ENCODE measurements at regions of chr1 and their contacts with region 1.

Region 1: DNA sequence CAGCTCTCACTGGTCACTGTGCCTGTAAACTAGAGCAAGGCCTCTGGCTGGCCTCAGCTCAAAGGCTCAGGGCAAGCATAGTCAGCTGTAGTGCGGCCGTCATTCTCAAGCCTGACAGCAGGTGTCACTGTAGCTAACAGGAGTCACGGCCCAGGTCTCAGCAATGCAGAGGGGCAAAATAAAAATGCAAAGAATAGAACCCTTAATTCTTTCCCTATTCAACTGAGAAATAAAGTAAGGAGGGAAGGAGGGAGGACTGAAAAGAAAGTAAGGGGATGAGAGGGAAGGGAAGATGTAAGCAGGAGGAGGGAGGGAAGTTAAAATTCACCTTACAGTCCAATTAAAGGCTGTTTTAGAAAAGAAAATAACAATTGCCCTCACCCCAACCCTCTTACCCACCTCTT is 106.1 kb downstream of the KIAA0319L start:
- DNase-seq: peak; percentile 51
- H3K4me3 ChIP-seq: no peak overlapping the region
- H3K27ac ChIP-seq: peak overlapping the region; percentile 87
- H3K27me3 ChIP-seq: no peaks in the 10 kb centered on the region
- CTCF ChIP-seq: peak; percentile 89

Region 2: GRCh38 chr1:35466120-35466519 is 15.0 kb after region 1 on chr1:
- CTCF ChIA-PET with region 1: interaction called, 20 read pairs
- POLR2A ChIA-PET with region 1: no interaction called
- DNase-seq: no peak
- H3K4me3 ChIP-seq: no peak overlapping the region
- H3K27ac ChIP-seq: no peak overlapping the region
- H3K27me3 ChIP-seq: no peaks in the 10 kb centered on the region
- CTCF ChIP-seq: no peak

Region 3: GRCh38 chr1:35536556-35537162 is 85.5 kb after region 1 on chr1:
- CTCF ChIA-PET with region 1: interaction called, 31 read pairs
- POLR2A ChIA-PET with region 1: interaction called, 4 read pairs
- DNase-seq: no peak
- H3K4me3 ChIP-seq: no peak overlapping the region
- H3K27ac ChIP-seq: no peak overlapping the region
- H3K27me3 ChIP-seq: no peaks in the 10 kb centered on the region
- CTCF ChIP-seq: no peak

Region 4: GRCh38 chr1:35557292-35558063 is 106.4 kb after region 1 on chr1 and contains the starts of genes KIAA0319L and NCDN:
- CTCF ChIA-PET with region 1: interaction called, 57 read pairs
- POLR2A ChIA-PET with region 1: interaction called, 12 read pairs
- DNase-seq: peak; percentile 95
- H3K4me3 ChIP-seq: peak within 1 kb of the TSS; percentile 96
- H3K27ac ChIP-seq: peak within 1 kb of the TSS; percentile 95
- H3K27me3 ChIP-seq: no peaks in the 10 kb centered on the region
- CTCF ChIP-seq: no peak
- polyA plus RNA-seq, gene KIAA0319L: 53.2 and 69.5 TPM in 2 replicates
- polyA plus RNA-seq, gene NCDN: 16.7 and 22.6 TPM in 2 replicates

Region 5: GRCh38 chr1:35769188-35769758 is 318.1 kb after region 1 on chr1:
- CTCF ChIA-PET with region 1: interaction called, 17 read pairs
- POLR2A ChIA-PET with region 1: interaction called, 3 read pairs
- DNase-seq: peak; percentile 55
- H3K4me3 ChIP-seq: peak overlapping the region; percentile 78
- H3K27ac ChIP-seq: peak overlapping the region; percentile 70
- H3K27me3 ChIP-seq: no peaks in the 10 kb centered on the region
- CTCF ChIP-seq: peak; percentile 36

Measured in AG04450 (cell line).